Left cardiac atrium (tissue), 4 donors: ENCODE measurements at regions of chr11 and their contacts with region 1.

Region 1: DNA sequence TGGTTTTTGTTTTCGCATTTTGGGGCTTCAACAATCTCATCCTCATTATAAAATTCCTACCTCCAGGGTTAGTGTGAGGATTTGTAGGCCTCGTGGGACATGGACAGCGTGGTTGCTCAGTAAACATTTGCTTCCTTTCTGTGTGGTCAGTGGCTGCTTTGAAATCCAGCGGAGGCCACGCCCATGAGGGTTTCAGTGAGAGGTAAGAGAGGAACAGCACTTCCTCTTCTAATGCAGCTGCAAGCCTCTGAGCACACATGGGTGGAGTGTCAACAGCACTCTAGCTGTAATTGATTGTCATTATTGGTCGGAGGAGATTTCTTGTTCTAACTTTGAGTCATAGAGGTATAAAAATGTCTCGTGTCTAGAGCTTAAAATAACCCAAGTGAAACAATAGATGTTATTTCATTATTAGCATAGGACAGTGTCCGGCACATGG is 6.0 kb upstream of the ARHGAP42 start:
- DNase-seq: peak; percentile 46
- ATAC-seq: peak; percentile 38 to 60

Region 2: GRCh38 chr11:100855466-100856067 is 174.5 kb after region 1 on chr11:
- intact Hi-C with region 1: loop called (anchors 2 to 5 kb)
- DNase-seq: no peak
- ATAC-seq: no peak